HepG2 (cell line): ENCODE measurements at regions of chr10 and their contacts with region 1.

Region 1: GRCh38 chr10:11724938-11725776 is 17.0 kb upstream of the ECHDC3 start:
- DNase-seq: peak; percentile 80
- ATAC-seq: peak; percentile 96
- H3K4me3 ChIP-seq: peak overlapping the region; percentile 25 to 46 (median 31); a peak in 3 of 6 replicates
- H3K27ac ChIP-seq: no peak overlapping the region
- H3K4me1 ChIP-seq: peaks cover 45% of the 10 kb centered on the region
- H3K27me3 ChIP-seq: no peaks in the 10 kb centered on the region
- CTCF ChIP-seq: peak; percentile 90
- EP300 ChIP-seq: no peak
- POLR2A ChIP-seq: no peak
- RAD21 ChIP-seq: peak; percentile 86

Region 2: DNA sequence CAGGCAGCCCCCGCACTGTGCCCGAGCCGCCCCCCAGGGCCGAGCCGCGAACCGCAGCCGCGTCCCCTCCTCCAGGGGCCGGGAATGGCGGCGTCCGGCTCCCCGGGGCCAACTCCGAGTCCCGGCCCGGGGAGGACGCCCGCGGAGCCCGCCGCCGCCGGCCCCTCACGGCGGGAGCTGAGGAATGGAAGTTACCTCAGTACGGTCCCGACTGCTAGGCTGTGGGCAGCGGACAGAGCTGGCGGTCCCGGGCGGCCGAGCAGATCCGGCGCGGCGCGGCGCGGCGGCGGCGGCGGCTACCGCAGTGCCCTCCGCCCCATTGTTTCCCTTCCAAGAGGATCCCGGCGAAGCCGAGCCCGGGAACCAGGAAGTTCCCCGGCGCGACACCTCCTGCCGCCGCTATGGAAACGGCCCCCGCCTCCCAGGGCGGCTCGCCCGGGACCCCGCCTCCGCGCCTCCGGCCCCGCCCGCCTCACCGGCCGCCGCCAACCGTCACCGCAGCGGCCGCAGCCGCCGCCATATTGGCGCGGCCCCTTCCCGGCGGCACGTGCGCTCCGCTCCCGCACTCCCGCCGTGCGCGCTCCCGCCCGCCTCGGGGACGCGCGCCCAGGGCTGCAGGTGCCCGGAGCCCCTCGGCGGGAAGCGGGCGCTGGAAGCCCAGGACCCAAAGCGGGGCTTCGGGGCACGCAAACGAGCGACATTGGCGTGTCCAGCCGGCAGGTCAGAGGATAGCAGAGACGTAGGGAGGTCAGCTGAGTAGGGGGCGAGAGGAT is 113.7 kb before region 1 on chr10 and contains the start of gene USP6NL:
- CTCF ChIA-PET with region 1: no interaction called
- POLR2A ChIA-PET with region 1: no interaction called
- in situ Hi-C with region 1: loop called (anchors 10 kb)
- intact Hi-C with region 1: no loop called
- DNase-seq: peak; percentile 70
- ATAC-seq: peak; percentile 88
- H3K4me3 ChIP-seq: peak within 1 kb of the TSS; percentile 90 to 96 (median 92)
- H3K27ac ChIP-seq: peak within 1 kb of the TSS; percentile 82
- H3K4me1 ChIP-seq: peaks cover 67% of the 10 kb centered on the region
- H3K27me3 ChIP-seq: no peaks in the 10 kb centered on the region; a peak in 1 of 5 replicates
- CTCF ChIP-seq: no peak
- EP300 ChIP-seq: no peak
- POLR2A ChIP-seq: peak; percentile 43 to 69
- RAD21 ChIP-seq: no peak; the same call in 1 of the 2 replicates
- total RNA-seq, gene USP6NL: 22.9 and 26.2 TPM in 2 replicates

Region 3: DNA sequence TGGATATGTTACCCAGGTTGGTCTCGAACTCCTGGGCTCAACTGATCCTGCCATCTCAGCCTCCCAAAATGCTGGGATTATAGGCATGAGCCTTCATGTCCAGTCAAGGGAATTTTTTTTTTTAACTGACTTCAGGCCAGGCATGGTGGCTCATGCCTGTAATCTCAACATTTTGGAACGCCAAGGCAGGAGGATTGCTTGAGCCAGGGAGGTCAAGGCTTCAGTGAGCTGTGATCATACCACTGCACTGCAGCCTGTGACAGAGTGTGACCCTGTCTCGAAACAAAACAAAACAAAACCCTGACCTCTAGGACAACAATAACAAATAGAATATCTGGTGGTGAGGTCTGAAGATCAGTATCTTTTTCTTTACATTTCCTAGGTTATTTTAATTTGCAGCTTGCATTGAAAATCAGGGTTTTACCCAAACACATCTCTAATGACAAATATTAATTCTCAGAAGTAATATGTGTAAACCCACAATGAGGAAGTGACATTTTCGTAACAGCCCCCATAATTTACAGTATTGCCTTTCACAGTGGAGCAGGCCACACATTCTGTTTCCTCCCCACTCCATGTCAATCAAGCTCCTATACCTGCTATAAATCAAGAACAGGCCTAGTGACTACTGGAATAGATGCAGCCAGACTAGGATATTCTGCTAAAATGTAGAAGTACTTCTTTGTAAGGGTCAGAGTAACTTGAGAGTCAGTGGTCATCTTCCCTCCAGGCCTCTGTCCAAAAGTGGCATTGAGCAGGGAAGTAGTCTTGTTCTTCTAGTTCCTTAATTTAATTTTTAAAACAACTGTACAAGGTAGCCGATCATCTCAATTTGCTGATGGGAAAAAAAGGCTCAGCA is 26.2 kb before region 1 on chr10:
- CTCF ChIA-PET with region 1: interaction called, 4 read pairs
- POLR2A ChIA-PET with region 1: interaction called, 8 read pairs
- in situ Hi-C with region 1: no loop called
- intact Hi-C with region 1: loop called (anchors 1 kb)
- DNase-seq: peak; percentile 61
- ATAC-seq: peak; percentile 60
- H3K4me3 ChIP-seq: peak overlapping the region; percentile 2 to 34 (median 33); a peak in 4 of 6 replicates
- H3K27ac ChIP-seq: peak overlapping the region; percentile 83
- H3K4me1 ChIP-seq: peaks cover 72% of the 10 kb centered on the region
- H3K27me3 ChIP-seq: no peaks in the 10 kb centered on the region
- CTCF ChIP-seq: no peak
- EP300 ChIP-seq: peak in 1 of 2 experiments; percentile 68; a peak in 2 of 4 replicates
- POLR2A ChIP-seq: no peak
- RAD21 ChIP-seq: no peak

Region 4: GRCh38 chr10:11746883-11747539 is 21.9 kb after region 1 on chr10:
- CTCF ChIA-PET with region 1: no interaction called
- POLR2A ChIA-PET with region 1: no interaction called
- in situ Hi-C with region 1: no loop called
- intact Hi-C with region 1: no loop called
- DNase-seq: no peak
- ATAC-seq: peak; percentile 48; the same call in 2 of the 3 replicates
- H3K4me3 ChIP-seq: no peak overlapping the region
- H3K27ac ChIP-seq: no peak overlapping the region
- H3K4me1 ChIP-seq: peaks cover 33% of the 10 kb centered on the region
- H3K27me3 ChIP-seq: peaks cover 0 to 3% of the 10 kb centered on the region in 2 experiments; a peak in 2 of 5 replicates
- CTCF ChIP-seq: no peak
- EP300 ChIP-seq: no peak
- POLR2A ChIP-seq: no peak
- RAD21 ChIP-seq: no peak

Region 5: DNA sequence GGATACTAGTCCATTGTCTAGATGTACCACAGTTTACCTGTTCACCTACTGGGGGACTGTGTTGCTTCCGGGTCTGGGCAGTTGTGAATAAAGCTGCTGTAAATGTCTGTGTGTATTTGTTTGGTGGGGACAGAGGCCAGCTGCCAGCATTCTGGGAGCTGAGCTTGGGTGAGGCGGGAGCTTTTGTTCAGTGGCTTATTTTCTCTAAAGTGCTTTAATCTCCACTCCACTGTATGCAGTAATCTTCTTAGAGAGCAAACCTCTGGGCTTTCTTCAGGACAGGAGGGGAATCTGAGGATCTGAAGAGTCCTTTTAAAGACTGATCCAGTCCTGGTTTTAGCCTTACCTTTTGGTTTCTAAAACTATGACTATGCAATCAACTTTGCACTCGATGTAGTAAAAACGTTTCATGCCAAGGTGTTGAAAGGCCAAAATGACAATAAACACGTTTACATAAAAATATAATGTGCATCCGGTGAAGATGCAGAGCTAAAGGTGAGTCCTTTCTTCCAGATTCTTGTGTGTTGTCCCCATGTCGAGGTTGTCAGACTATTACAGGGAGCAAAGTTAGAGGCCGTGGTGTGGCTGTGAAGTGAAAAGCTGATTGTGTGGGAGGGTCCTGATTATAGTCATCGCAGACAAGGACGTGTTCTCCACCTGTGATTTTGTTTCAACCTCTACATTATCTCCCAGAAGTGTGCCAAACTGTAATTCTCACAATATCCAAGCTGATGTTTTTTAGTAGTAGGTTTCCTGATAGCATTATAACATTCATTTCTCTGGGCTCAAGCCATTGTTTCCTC is 904.0 kb after region 1 on chr10:
- CTCF ChIA-PET with region 1: no interaction called
- POLR2A ChIA-PET with region 1: no interaction called
- in situ Hi-C with region 1: no loop called
- intact Hi-C with region 1: no loop called
- DNase-seq: no peak
- ATAC-seq: no peak
- H3K4me3 ChIP-seq: no peak overlapping the region
- H3K27ac ChIP-seq: no peak overlapping the region
- H3K4me1 ChIP-seq: peaks cover 37% of the 10 kb centered on the region
- H3K27me3 ChIP-seq: peaks cover 0 to 2% of the 10 kb centered on the region in 2 experiments; a peak in 1 of 5 replicates
- CTCF ChIP-seq: no peak
- EP300 ChIP-seq: no peak
- POLR2A ChIP-seq: no peak
- RAD21 ChIP-seq: no peak